ENCODE measurements at regions of chr21 and their contacts with region 1.

Region 1: GRCh38 chr21:44742418-44743153 is 31.2 kb upstream of the TSPEAR start:
- DNase-seq: no peak
- H3K4me3 ChIP-seq: no peak overlapping the region
- H3K27ac ChIP-seq: no peak overlapping the region
- H3K4me1 ChIP-seq: no peaks in the 10 kb centered on the region
- H3K27me3 ChIP-seq: no peaks in the 10 kb centered on the region
- CTCF ChIP-seq: no peak
- POLR2A ChIP-seq: no peak

Region 2: GRCh38 chr21:44637018-44637850 is 105.4 kb before region 1 on chr21 and contains the start of gene KRTAP10-10:
- intact Hi-C with region 1: loop called (anchors 5 kb)
- DNase-seq: no peak
- H3K4me3 ChIP-seq: no peak within 1 kb of the TSS
- H3K27ac ChIP-seq: no peak within 1 kb of the TSS
- H3K4me1 ChIP-seq: no peaks in the 10 kb centered on the region
- H3K27me3 ChIP-seq: peaks cover 0 to 28% of the 10 kb centered on the region in 2 donors
- CTCF ChIP-seq: no peak
- POLR2A ChIP-seq: no peak
- total RNA-seq, gene KRTAP10-10: not detected

Measured in breast epithelium (tissue), 4 donors.